ENCODE measurements at regions of chr15 and their contacts with region 1.

Region 1: GRCh38 chr15:47196057-47196456 is 521.2 kb upstream of the SEMA6D start:
- DNase-seq: peak; percentile 92

Region 2: GRCh38 chr15:46879032-46879770 is 316.9 kb before region 1 on chr15:
- intact Hi-C with region 1: no loop called
- DNase-seq: no peak

Region 3: GRCh38 chr15:47258521-47258920 is 62.5 kb after region 1 on chr15:
- intact Hi-C with region 1: no loop called
- DNase-seq: no peak

Region 4: DNA sequence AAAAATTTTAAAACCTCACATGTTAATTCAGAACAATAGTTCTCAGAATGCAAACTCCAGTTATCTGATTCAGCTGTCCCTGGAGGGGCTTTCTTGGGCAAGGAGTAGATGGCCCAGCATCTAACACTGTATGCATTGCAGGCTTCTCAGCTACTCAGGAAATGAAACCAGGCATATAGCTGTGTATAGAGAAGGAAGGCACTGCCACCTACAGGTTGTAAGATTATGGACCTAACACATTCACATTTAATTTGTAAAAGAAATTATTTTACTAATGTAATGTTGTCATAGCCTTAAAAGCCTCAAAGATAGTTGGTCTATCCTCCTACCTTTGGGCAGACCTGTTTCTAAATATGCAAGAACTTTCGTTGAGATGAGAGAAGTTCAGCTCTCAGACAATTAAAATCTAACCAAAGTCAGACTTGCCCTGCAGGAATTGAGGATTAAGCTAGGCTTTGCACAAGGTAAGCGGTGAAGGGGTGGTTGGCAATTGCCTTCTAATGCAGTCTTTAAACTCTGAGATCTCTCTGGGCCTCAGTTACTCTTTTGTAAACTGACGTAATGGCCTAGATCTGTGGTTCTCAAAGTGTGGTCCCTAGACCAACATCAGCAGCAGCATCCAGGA is 792.0 kb after region 1 on chr15:
- intact Hi-C with region 1: loop called (anchors 5 to 10 kb)
- DNase-seq: no peak

Measured in posterior vena cava (tissue), 2 donors.